Endothelial cell of umbilical vein (primary cell): ENCODE measurements at regions of chr16 and their contacts with region 1.

Region 1: DNA sequence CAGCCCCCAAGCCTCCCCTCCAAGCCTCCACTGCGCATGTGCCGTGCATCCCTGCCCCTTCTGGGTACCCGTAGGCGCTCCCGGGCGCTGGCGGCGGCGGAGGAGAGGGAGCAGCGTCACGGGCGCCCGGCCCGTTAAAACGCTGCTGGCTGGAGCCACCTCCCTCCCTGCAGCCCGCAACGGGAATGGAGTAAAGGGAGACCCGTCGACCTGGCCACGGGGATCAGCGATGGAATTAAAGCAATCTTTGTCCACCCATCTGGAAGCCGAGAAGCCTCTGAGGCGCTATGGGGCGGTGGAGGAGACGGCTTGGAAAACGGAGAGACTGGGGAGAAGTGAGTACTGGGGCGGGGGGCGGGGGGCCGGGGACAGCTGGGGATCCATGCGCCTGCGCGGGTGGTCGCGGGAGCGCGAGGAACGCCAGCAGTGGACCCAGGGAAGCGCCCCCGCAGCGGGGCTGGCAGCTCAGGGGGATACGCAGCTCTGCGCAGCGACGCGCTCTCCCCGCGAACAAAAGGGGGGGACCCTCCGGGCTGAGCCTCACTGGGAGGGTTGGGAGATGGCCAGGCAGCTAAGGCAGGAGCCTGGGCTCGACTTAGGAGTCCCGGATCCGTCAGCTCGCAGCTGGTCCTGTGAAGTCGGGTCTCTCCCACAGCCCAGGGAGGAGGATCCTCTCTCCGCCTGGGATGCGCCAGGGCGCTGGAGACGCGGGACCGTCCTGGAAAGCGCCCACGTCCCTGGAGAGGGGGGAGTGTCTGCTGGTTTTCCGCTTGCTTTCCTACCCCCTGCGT is at the start of gene BMERB1:
- DNase-seq: peak; percentile 73
- H3K4me3 ChIP-seq: peak within 1 kb of the TSS; percentile 67 to 96 (median 72)
- H3K27ac ChIP-seq: no peak within 1 kb of the TSS
- H3K4me1 ChIP-seq: peaks cover 9% of the 10 kb centered on the region
- H3K27me3 ChIP-seq: no peaks in the 10 kb centered on the region
- CTCF ChIP-seq: no peak
- POLR2A ChIP-seq: no peak
- total RNA-seq, gene BMERB1: 14.1 and 27.2 TPM in 2 replicates

Region 2: GRCh38 chr16:15482068-15482747 is 47.6 kb after region 1 on chr16:
- CTCF ChIA-PET with region 1: no interaction called
- POLR2A ChIA-PET with region 1: no interaction called
- dilution Hi-C with region 1: no loop called
- intact Hi-C with region 1: loop called (anchors 5 kb)
- DNase-seq: peak; percentile 95
- H3K4me3 ChIP-seq: no peak overlapping the region
- H3K27ac ChIP-seq: peak overlapping the region; percentile 10
- H3K4me1 ChIP-seq: peaks cover 12% of the 10 kb centered on the region
- H3K27me3 ChIP-seq: no peaks in the 10 kb centered on the region
- CTCF ChIP-seq: no peak
- POLR2A ChIP-seq: no peak

Region 3: DNA sequence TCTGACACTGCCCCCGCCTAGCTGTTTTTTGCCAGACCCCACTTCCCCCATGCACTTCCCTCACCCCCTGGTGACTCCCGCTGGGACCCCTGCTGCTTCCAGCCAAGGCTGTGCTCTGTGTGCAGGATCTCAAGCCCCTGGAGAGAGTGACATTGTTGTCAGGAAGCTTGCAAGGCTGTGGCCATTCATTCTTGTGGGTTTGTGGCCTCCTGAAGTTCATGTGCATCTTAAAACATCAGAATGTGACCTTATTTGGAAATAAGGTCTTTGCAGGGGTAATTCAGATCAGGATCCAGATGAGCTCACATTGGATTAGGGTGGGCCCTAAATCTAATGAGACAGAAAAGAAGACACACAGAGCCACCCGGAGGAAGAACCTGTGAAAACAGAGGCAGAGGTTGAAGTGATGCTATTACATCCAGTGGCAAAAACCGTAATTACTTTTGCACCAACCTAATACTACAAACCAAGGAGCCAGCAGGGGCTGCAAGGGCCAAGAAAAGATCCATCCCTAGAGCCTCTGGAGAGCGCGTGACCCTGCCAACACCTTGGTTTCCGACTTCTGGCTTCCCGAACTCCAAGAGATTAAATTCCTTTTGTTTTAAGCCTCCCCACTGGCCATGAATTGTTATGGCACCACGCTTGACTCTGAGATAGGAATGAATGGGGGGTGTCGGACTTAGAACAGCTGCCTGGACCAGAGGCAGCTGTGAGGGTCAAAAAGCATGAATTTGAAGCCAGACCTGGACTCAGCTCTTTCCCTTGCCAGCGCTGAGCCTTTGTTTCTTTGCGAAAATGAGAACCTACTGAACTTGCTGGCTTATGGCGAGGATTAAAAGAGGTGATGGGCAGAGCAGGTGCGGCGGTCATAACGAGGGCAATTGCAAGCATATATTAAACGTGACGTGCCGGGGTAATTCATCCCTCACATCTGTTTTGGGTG is 75.2 kb after region 1 on chr16:
- CTCF ChIA-PET with region 1: no interaction called
- POLR2A ChIA-PET with region 1: no interaction called
- dilution Hi-C with region 1: no loop called
- intact Hi-C with region 1: no loop called
- DNase-seq: no peak
- H3K4me3 ChIP-seq: no peak overlapping the region
- H3K27ac ChIP-seq: no peak overlapping the region
- H3K4me1 ChIP-seq: no peaks in the 10 kb centered on the region
- H3K27me3 ChIP-seq: no peaks in the 10 kb centered on the region
- CTCF ChIP-seq: no peak
- POLR2A ChIP-seq: no peak

Region 4: DNA sequence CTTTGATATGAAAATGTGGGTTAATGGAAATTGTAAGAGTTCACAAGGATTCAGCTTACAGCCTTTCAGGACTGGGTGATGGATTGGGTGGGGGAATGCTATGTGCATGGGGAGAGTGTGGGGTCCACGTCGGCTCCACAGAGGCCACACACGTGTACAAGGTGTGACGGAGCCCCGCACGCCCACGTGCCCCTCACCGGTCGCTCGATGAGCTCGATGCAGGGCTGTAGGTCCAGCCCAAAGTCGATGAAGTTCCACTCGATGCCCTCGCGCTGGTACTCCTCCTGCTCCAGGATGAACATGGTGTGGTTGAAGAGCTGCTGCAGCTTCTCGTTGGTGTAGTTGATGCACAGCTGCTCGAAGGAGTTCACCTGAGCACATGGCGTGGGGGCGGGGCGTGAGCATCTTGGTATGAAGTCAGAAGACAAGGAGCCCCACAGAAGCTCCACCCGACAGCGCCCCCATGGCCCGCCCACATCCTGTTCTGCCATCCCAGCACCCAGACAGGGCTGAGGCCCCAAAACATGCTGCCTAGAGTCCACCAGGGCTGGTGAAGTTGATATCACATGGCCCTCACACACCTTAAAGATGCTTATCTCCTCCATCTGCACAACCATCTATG is 323.1 kb after region 1 on chr16:
- CTCF ChIA-PET with region 1: no interaction called
- POLR2A ChIA-PET with region 1: no interaction called
- dilution Hi-C with region 1: no loop called
- intact Hi-C with region 1: loop called (anchors 2 kb)
- DNase-seq: no peak
- H3K4me3 ChIP-seq: no peak overlapping the region
- H3K27ac ChIP-seq: no peak overlapping the region
- H3K4me1 ChIP-seq: no peaks in the 10 kb centered on the region
- H3K27me3 ChIP-seq: no peaks in the 10 kb centered on the region
- CTCF ChIP-seq: no peak
- POLR2A ChIP-seq: no peak